PC-9 (cell line): ENCODE measurements at regions of chr11 and their contacts with region 1.

Region 1: GRCh38 chr11:79200398-79201070 is 240.3 kb downstream of the TENM4 start:
- DNase-seq: no peak
- H3K4me3 ChIP-seq: no peak overlapping the region
- H3K27ac ChIP-seq: no peak overlapping the region
- H3K4me1 ChIP-seq: no peaks in the 10 kb centered on the region
- H3K27me3 ChIP-seq: peaks cover 21% of the 10 kb centered on the region
- CTCF ChIP-seq: no peak

Region 2: DNA sequence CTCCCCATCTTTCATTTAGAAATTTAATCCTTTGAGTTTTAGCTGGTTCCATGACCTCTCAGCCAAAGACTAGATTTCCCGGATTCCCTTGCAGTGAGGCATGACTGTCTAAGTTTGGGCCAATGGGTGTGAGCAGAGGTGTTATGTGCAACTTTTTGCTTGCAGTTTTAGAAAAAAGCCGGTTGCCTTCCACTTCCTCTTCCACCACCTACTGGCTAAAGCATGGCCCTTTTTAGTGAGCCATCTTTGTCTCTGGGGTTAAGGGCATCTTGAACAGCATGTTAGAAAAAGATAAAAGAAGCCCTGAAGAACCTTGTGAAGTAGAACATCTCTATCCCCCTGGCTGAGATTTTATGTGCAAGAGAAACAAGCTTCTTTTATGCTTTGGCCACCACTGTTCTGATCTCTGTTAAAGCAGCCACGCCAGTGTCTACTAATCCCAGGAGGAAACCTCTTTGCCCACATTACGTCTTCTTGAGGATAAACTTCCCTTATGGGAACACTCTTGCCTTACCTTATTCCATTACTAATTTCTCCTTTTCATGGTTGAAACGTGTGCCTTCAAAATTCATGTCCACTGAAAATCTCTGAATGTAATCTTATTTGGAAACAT is 39.6 kb before region 1 on chr11:
- CTCF ChIA-PET with region 1: no interaction called
- POLR2A ChIA-PET with region 1: no interaction called
- intact Hi-C with region 1: no loop called
- DNase-seq: no peak
- H3K4me3 ChIP-seq: no peak overlapping the region
- H3K27ac ChIP-seq: no peak overlapping the region
- H3K4me1 ChIP-seq: no peaks in the 10 kb centered on the region
- H3K27me3 ChIP-seq: no peaks in the 10 kb centered on the region
- CTCF ChIP-seq: no peak

Region 3: GRCh38 chr11:79212741-79213190 is 12.2 kb after region 1 on chr11:
- CTCF ChIA-PET with region 1: no interaction called
- POLR2A ChIA-PET with region 1: interaction called, 10 read pairs
- intact Hi-C with region 1: no loop called
- DNase-seq: no peak
- H3K4me3 ChIP-seq: no peak overlapping the region
- H3K27ac ChIP-seq: no peak overlapping the region
- H3K4me1 ChIP-seq: no peaks in the 10 kb centered on the region
- H3K27me3 ChIP-seq: peaks cover 75% of the 10 kb centered on the region
- CTCF ChIP-seq: no peak